ENCODE measurements at regions of chr11 and their contacts with region 1.

Region 1: DNA sequence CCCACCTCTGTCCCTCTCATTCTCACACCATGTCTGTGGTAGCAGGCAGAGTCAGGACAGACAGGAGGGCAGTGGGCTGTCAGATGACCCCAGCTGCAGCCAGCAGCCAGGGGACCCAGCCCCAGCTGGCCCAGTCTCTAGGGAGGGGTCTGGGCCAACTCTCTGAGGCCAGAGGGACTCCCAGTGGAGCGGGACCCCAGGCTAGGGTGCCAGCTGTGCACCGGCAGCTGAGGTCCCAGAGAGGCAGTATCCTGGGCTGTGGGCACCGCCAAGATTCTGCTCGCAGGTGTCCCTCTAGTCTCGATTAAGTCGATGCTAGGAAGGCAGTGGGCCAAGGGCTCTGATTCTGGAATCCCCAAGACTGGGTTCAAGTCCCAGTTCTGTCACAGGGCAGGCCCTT is 16.7 kb upstream of the FADD start:
- DNase-seq: no peak
- H3K4me3 ChIP-seq: no peak overlapping the region
- H3K27ac ChIP-seq: no peak overlapping the region
- H3K4me1 ChIP-seq: no peaks in the 10 kb centered on the region
- H3K27me3 ChIP-seq: no peaks in the 10 kb centered on the region
- CTCF ChIP-seq: no peak
- EP300 ChIP-seq: no peak
- POLR2A ChIP-seq: no peak

Region 2: GRCh38 chr11:69909561-69910496 is 276.6 kb before region 1 on chr11:
- intact Hi-C with region 1: loop called in 1 of 4 experiments (anchors 5 kb)
- DNase-seq: peak in 1 of 5 donors; percentile 35
- H3K4me3 ChIP-seq: no peak overlapping the region
- H3K27ac ChIP-seq: no peak overlapping the region
- H3K4me1 ChIP-seq: no peaks in the 10 kb centered on the region
- H3K27me3 ChIP-seq: no peaks in the 10 kb centered on the region
- CTCF ChIP-seq: peak in 1 of 3 donors; percentile 10
- EP300 ChIP-seq: no peak
- POLR2A ChIP-seq: no peak

Region 3: DNA sequence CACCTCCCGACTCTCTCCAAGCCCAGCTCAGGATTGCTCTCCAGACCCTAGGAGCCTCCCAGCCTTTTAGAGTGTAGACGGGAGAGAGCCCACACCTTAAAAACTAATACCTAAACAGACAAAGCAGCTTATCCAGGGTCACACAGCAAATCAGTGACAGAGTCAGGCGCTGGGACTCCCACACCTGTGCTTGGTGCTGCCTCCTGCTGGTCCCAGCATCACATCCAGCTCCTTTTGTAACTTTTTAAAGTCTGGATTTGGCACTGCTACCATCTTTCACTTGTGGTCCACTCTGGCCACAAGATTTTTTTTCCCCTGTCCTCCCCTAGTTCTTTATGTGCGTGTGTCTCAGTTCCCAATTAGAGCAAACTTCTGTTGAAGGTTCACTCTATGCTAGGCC is 103.6 kb before region 1 on chr11:
- intact Hi-C with region 1: no loop called
- DNase-seq: no peak
- H3K4me3 ChIP-seq: no peak overlapping the region
- H3K27ac ChIP-seq: no peak overlapping the region
- H3K4me1 ChIP-seq: no peaks in the 10 kb centered on the region
- H3K27me3 ChIP-seq: no peaks in the 10 kb centered on the region
- CTCF ChIP-seq: no peak
- EP300 ChIP-seq: no peak
- POLR2A ChIP-seq: no peak

Region 4: GRCh38 chr11:70290361-70291065 is 104.1 kb after region 1 on chr11:
- intact Hi-C with region 1: no loop called
- DNase-seq: no peak
- H3K4me3 ChIP-seq: no peak overlapping the region
- H3K27ac ChIP-seq: no peak overlapping the region
- H3K4me1 ChIP-seq: no peaks in the 10 kb centered on the region
- H3K27me3 ChIP-seq: no peaks in the 10 kb centered on the region
- CTCF ChIP-seq: no peak
- EP300 ChIP-seq: no peak
- POLR2A ChIP-seq: no peak